ENCODE measurements at regions of chr3 and their contacts with region 1.

Region 1: DNA sequence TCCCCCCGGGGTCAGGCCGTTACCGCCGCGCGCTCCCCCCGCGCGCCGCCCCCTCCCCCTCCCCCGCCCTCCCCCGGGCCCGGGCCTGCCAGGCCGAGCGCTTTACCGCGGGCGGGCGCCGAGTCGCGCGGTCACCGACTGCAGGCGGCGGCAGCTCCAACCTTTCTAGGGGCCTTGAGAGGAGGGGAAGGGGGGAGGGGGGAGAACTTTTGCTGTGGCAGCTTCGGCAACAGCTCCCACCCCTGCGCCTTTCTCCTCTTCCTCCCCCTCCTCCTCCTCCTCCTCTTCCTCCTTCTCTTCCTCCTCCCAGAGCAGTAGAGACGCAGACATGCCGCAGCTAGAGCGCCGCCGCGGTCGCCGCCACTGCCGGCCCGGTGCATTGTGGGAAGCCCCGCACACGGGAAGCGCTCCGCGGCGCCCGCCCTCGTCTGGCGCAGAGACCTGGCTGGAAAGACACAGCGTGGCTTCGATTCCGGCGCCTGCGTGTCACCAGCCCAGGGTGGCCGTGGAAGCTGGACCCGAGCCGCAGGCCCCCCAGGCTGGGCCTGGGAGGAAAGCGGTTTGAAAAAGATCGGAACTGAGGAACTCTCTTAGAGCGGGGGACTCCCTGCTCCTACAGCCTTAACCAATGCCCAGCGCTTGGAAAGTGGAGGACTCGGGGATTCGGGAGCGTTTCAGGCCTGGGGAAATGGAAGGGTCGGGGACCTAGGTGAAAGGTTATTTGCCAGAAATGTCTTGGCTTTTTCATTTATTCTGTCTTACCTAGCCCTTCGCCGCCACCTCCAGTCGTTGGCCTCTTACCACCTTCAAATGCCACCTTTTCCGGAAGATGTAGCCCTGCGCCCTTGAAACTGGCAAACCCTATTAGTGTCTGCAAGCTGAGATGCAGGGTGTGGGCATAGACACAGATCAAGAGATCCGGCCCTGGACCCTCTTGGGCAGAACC is at the start of gene ZNF148:
- DNase-seq: peak; percentile 91
- H3K4me3 Mint-ChIP-seq: peak within 1 kb of the TSS; percentile 97
- H3K27ac Mint-ChIP-seq: peak within 1 kb of the TSS; percentile 85
- H3K4me1 Mint-ChIP-seq: peaks cover 33% of the 10 kb centered on the region
- H3K27me3 Mint-ChIP-seq: no peaks in the 10 kb centered on the region
- total RNA-seq, gene ZNF148: 36.9 to 41.9 TPM

Region 2: DNA sequence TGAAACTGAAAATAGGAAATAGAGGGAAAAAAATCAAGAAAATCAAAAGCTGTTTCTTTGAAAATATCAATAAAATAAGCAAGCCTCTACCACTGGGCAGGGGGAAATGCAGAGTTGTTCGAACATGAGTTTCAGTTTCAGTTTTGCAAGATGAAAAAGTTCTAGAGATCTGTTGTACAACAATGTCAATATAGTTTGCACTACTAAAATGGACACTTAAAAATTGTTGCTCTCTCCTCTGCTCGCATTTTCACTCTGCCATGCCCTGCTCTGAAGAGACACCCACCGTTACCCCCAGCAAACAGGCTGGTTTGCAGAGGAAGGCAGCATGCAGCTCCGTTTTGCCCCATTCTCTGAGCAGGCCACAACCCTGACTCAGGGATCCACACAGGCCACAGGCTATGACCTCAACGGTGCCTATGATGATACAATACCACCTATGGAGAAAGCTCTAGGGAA is 64.6 kb before region 1 on chr3:
- CTCF ChIA-PET with region 1: no interaction called
- POLR2A ChIA-PET with region 1: interaction called, 18 read pairs
- DNase-seq: peak; percentile 68
- H3K4me3 Mint-ChIP-seq: peak overlapping the region; percentile 82
- H3K27ac Mint-ChIP-seq: peak overlapping the region; percentile 85
- H3K4me1 Mint-ChIP-seq: peaks cover 21% of the 10 kb centered on the region
- H3K27me3 Mint-ChIP-seq: no peaks in the 10 kb centered on the region

Region 3: GRCh38 chr3:125389282-125389681 is 14.0 kb after region 1 on chr3:
- CTCF ChIA-PET with region 1: no interaction called
- POLR2A ChIA-PET with region 1: interaction called, 10 read pairs
- DNase-seq: no peak
- H3K4me3 Mint-ChIP-seq: no peak overlapping the region
- H3K27ac Mint-ChIP-seq: no peak overlapping the region
- H3K4me1 Mint-ChIP-seq: peaks cover 17% of the 10 kb centered on the region
- H3K27me3 Mint-ChIP-seq: peaks cover 14% of the 10 kb centered on the region

Region 4: GRCh38 chr3:125608419-125608818 is 233.2 kb after region 1 on chr3:
- CTCF ChIA-PET with region 1: no interaction called
- POLR2A ChIA-PET with region 1: no interaction called
- DNase-seq: no peak
- H3K4me3 Mint-ChIP-seq: no peak overlapping the region
- H3K27ac Mint-ChIP-seq: no peak overlapping the region
- H3K4me1 Mint-ChIP-seq: no peaks in the 10 kb centered on the region
- H3K27me3 Mint-ChIP-seq: no peaks in the 10 kb centered on the region

Measured in activated CD4-positive, alpha-beta memory T cell treated with anti-CD3 and anti-CD28 coated beads, Interleukin-2, amount 10 ng/mL, durations not matched to agents 7 days and 5 days (primary cell).